ENCODE measurements at regions of chr15 and their contacts with region 1.

Region 1: DNA sequence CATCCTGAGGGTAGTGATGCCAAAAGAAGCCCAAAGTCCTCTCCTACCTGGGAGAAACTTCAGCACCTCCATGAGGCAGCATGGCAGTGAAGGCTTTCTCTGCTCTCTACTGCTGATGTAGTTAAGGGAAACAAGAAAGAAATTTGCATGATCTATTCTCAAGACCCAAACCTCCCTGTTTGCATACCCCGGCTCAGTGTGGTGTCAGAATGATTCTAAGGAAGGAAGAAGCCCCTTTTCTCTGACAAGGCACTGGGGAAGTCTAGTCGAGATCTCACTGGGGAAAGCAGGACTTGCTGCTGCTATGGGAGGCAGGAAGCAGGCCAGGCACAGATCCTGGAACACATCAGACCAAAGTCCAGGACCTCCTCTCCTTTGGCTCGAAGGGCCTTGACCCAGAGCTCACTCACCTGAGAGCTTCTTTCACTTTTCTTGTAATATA is 89.4 kb upstream of the ICE2 start:
- DNase-seq: peak in 1 of 5 donors; percentile 39
- H3K4me3 ChIP-seq: peak overlapping the region; percentile 2 to 20
- H3K4me3 Mint-ChIP-seq: peak overlapping the region; percentile 8 to 77 (median 70)
- H3K27ac ChIP-seq: peak overlapping the region; percentile 61
- H3K27ac Mint-ChIP-seq: peak overlapping the region; percentile 81 to 97 (median 92)
- H3K4me1 ChIP-seq: peaks cover 99% of the 10 kb centered on the region
- H3K4me1 Mint-ChIP-seq: peaks cover 84 to 98% (median 90%) of the 10 kb centered on the region in 4 donors
- H3K27me3 ChIP-seq: no peaks in the 10 kb centered on the region
- H3K27me3 Mint-ChIP-seq: no peaks in the 10 kb centered on the region

Region 2: GRCh38 chr15:60340207-60340921 is 228.0 kb before region 1 on chr15:
- CTCF ChIA-PET with region 1: no interaction called
- POLR2A ChIA-PET with region 1: no interaction called
- intact Hi-C with region 1: no loop called
- DNase-seq: no peak
- H3K4me3 ChIP-seq: no peak overlapping the region
- H3K4me3 Mint-ChIP-seq: no peak overlapping the region
- H3K27ac ChIP-seq: no peak overlapping the region
- H3K27ac Mint-ChIP-seq: no peak overlapping the region
- H3K4me1 ChIP-seq: no peaks in the 10 kb centered on the region
- H3K4me1 Mint-ChIP-seq: no peaks in the 10 kb centered on the region
- H3K27me3 ChIP-seq: no peaks in the 10 kb centered on the region
- H3K27me3 Mint-ChIP-seq: no peaks in the 10 kb centered on the region

Region 3: DNA sequence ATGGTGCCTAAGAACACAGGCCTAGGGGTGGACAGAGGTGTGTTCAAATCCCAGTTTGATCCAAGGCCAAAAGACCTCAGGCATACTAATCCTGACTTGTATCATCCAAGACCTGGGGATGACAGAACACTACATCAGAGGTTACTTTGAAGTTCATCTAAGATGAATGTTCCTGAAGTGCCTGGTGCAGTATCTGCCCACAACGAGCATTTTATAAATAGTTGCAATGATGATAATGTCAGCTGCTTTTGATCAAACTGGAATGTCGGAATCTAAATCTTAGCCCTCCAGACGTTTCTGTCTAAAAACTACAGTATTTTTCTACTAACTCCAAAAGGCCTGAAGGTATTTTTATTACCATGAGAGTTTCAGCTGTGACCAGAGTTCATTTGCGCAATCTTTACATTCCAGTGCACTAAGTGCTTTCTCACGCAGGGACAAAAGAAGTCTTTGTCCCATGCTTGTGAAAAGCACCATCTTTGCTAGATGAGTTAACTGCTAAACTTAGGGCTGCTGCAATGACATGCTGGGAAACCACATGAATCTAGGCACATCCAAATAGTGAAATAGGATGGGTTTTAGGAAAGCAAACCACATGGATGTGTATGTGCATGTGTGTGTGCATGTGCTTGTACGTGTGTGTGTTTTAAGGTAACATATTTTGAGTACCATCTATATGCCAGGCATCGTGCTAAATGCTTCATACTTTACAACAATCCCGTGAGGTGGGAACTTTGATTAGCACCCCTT is 188.6 kb before region 1 on chr15:
- CTCF ChIA-PET with region 1: no interaction called
- POLR2A ChIA-PET with region 1: no interaction called
- intact Hi-C with region 1: no loop called
- DNase-seq: no peak
- H3K4me3 ChIP-seq: no peak overlapping the region
- H3K4me3 Mint-ChIP-seq: no peak overlapping the region
- H3K27ac ChIP-seq: no peak overlapping the region
- H3K27ac Mint-ChIP-seq: no peak overlapping the region
- H3K4me1 ChIP-seq: no peaks in the 10 kb centered on the region
- H3K4me1 Mint-ChIP-seq: peaks cover 4 to 20% (median 10%) of the 10 kb centered on the region in 4 donors
- H3K27me3 ChIP-seq: no peaks in the 10 kb centered on the region
- H3K27me3 Mint-ChIP-seq: no peaks in the 10 kb centered on the region

Region 4: DNA sequence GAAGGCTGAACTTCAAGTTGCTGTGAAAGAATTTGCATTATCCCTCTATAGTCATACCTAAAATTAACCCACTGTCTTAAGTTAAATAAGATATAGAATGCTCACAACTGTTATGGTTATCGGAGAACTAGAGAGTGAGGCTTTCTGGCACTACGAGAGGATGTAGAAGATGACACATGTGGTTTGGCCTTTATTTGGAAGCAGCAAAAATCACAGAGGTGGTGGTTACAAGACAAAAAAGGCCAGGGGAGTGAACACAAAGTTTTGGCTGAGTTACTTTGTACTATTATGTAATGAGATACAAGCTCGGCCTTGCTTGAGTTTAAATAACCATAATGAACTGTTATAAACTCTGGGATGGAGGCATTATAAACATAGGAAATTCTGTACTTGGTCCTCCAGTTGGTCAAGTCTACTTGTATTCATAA is 11.1 kb before region 1 on chr15:
- CTCF ChIA-PET with region 1: interaction called, 37 read pairs
- POLR2A ChIA-PET with region 1: interaction called, 381 read pairs
- intact Hi-C with region 1: loop called (anchors 1 kb)
- DNase-seq: peak; percentile 51 to 68 (median 64)
- H3K4me3 ChIP-seq: no peak overlapping the region
- H3K4me3 Mint-ChIP-seq: peak overlapping the region in 7 of 8 donors; percentile 9 to 82 (median 73)
- H3K27ac ChIP-seq: peak overlapping the region; percentile 47
- H3K27ac Mint-ChIP-seq: peak overlapping the region; percentile 77 to 94 (median 92)
- H3K4me1 ChIP-seq: peaks cover 92% of the 10 kb centered on the region
- H3K4me1 Mint-ChIP-seq: peaks cover 65 to 91% (median 79%) of the 10 kb centered on the region in 4 donors
- H3K27me3 ChIP-seq: no peaks in the 10 kb centered on the region
- H3K27me3 Mint-ChIP-seq: no peaks in the 10 kb centered on the region

Region 5: GRCh38 chr15:60580650-60581376 is 12.5 kb after region 1 on chr15:
- CTCF ChIA-PET with region 1: interaction called, 87 read pairs
- POLR2A ChIA-PET with region 1: interaction called, 628 read pairs
- intact Hi-C with region 1: loop called (anchors 1 kb)
- DNase-seq: peak; percentile 74 to 88 (median 83)
- H3K4me3 ChIP-seq: peak overlapping the region in 1 of 2 donors; percentile 16
- H3K4me3 Mint-ChIP-seq: peak overlapping the region; percentile 73 to 89 (median 82)
- H3K27ac ChIP-seq: peak overlapping the region; percentile 92
- H3K27ac Mint-ChIP-seq: peak overlapping the region; percentile 92 to 98 (median 97)
- H3K4me1 ChIP-seq: peaks cover 99% of the 10 kb centered on the region
- H3K4me1 Mint-ChIP-seq: peaks cover 73 to 96% (median 85%) of the 10 kb centered on the region in 4 donors
- H3K27me3 ChIP-seq: no peaks in the 10 kb centered on the region
- H3K27me3 Mint-ChIP-seq: no peaks in the 10 kb centered on the region